Heart right ventricle (tissue), 16 donors: ENCODE measurements at regions of chr16 and their contacts with region 1.

Region 1: DNA sequence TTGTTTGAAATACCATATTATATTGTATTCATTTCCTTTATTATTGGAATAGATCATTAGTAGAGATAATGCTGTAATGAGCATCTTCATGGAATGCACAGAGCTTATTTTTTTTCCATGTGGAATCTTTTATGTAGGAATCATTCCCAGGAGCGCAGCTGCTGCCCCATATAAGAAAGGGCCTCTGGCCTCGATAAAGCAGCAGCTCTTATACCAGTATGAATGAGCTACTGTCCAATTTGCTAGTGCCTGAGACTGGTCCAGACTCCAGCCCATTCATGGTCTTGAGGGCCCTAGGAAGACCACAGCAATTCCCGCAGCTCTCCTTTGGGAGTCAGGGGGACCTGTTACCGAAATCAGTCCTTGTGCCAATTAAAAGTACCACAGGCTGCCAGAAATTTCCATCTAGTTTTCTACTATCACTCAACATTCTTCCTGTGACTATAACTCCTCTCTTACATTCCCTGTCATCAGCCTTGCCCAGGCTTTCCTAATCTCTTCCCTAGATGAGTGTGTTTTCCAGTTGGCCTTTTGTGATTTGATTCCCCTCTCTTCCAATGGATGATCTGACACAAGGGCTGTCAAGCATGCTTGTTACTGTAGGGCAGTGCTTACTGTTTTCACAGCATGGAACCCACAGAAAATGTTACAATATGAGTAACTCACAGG is 1.9 kb downstream of the ZNF843 start:
- DNase-seq: no peak
- ATAC-seq: no peak
- H3K4me3 ChIP-seq: no peak overlapping the region
- H3K27ac ChIP-seq: peak overlapping the region in 5 of 10 donors; percentile 8 to 93 (median 30)
- H3K4me1 ChIP-seq: peaks cover 0 to 37% (median 12%) of the 10 kb centered on the region in 9 donors
- H3K27me3 ChIP-seq: no peaks in the 10 kb centered on the region
- CTCF ChIP-seq: no peak

Region 2: GRCh38 chr16:30957456-30958174 is 483.0 kb before region 1 on chr16 and contains the start of gene SETD1A:
- intact Hi-C with region 1: loop called in 1 of 10 experiments (anchors 10 kb)
- DNase-seq: peak; percentile 96 to 99
- ATAC-seq: peak; percentile 90 to 97 (median 94)
- H3K4me3 ChIP-seq: peak within 1 kb of the TSS; percentile 70 to 99 (median 85)
- H3K27ac ChIP-seq: peak within 1 kb of the TSS; percentile 91 to 100 (median 99)
- H3K4me1 ChIP-seq: peaks cover 6 to 36% (median 29%) of the 10 kb centered on the region in 9 donors
- H3K27me3 ChIP-seq: no peaks in the 10 kb centered on the region
- CTCF ChIP-seq: no peak
- total RNA-seq, gene SETD1A: 7.5 to 11.4 (median 9.2) TPM

Region 3: DNA sequence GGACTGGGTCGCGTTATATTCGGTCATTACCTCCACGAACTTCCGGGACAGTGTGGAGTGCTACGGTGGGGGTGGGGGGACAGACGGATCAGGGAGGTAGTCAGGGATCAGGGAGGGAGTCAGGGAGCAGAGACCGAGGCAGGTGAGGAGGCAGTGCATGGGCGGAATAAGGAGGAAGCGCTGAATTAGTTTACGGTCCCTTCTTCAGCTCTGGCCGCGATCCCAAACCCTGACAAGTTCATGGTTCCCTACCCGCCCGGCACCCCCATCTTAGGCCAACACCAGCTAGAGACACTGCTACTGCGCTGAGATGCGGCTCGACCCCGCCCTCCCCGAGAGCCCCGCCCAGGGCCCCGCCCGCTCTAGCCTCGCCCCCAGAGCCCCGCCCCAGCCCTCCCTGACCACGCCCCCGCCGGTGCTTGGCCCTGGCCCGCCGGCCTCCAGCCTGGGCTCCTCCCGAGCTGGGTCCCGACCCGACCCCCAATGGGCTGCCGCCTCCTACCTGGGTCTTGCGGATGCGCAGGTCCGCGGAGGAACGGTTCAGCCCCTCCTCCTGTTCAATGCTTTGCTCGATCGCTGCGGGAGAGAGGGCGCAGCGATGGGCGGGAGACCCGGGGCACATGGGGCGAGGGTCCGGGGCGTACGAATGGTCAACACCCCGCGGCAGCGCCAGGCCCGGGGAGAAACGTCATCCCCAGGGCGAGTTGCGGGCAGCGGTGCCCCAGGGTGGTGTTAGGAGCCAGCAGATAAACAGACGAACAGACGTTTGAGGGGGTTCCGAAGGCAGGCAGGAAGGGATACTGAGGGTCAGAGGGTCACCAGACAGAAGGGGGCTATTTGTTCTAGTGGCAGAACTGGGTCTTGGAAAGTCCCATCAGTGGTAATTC is 443.4 kb before region 1 on chr16:
- intact Hi-C with region 1: loop called in 1 of 10 experiments (anchors 5 kb)
- DNase-seq: peak; percentile 74 to 90
- ATAC-seq: peak; percentile 93 to 95 (median 94)
- H3K4me3 ChIP-seq: peak overlapping the region; percentile 38 to 64 (median 60)
- H3K27ac ChIP-seq: peak overlapping the region in 9 of 10 donors; percentile 39 to 88 (median 55)
- H3K4me1 ChIP-seq: peaks cover 4 to 34% (median 16%) of the 10 kb centered on the region in 9 donors
- H3K27me3 ChIP-seq: no peaks in the 10 kb centered on the region
- CTCF ChIP-seq: no peak

Region 4: GRCh38 chr16:31179747-31180459 is 260.7 kb before region 1 on chr16 and contains the start of gene FUS:
- intact Hi-C with region 1: loop called in 3 of 10 experiments (anchors 5 to 10 kb)
- DNase-seq: peak; percentile 90 to 92
- ATAC-seq: peak; percentile 84 to 93 (median 90)
- H3K4me3 ChIP-seq: peak within 1 kb of the TSS; percentile 71 to 94 (median 83)
- H3K27ac ChIP-seq: peak within 1 kb of the TSS; percentile 89 to 99 (median 94)
- H3K4me1 ChIP-seq: peaks cover 10 to 57% (median 42%) of the 10 kb centered on the region in 9 donors
- H3K27me3 ChIP-seq: no peaks in the 10 kb centered on the region
- CTCF ChIP-seq: no peak
- total RNA-seq, gene FUS: 127 to 174 (median 140) TPM

Region 5: DNA sequence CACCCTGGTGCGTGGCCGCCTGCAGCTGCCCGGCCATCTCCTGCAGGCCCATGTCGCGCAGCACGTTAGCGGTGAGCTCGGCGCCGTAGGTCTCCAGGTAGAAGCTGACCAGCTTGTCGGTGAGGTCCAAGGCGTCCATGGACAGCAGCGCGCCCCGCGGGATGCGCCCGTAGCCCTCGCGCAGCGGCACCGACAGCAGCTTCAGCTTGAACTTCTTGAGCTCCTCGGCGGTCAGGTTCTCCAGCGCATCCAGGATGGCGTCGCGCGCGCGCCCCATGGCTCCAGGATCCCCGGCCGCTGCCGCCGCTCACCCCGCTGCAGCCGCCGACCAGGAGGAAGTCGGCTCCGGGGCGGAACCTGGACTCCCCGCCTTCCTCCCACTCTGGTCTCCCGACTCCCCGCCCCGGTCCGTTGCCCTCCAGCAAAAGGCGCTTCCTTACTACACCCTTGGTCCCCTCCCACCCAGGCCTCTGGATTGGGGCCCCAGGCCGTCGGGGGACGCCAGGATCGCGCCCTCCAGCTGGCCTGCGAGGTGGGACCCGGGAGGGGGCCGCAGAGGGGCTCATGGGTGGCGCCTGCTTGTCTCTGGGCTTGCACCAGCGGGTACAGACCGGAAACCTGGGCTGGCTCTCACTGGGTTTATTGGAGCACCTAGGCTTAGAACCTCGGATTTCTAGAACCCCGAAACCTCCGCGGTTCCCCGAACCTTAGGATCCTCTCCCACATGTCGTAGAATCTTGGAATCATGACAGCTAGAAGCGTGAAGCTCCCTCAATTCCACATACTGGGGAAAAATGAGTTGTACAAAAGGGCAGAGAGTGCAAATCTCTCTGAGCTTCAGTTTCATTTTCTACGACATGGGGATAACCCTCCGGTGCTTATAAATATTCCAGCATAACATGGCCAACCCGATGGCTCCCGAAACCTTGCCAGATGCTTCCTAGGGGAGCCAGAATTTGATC is 238.0 kb before region 1 on chr16 and contains the start of gene PYCARD:
- intact Hi-C with region 1: loop called in 1 of 10 experiments (anchors 10 kb)
- DNase-seq: peak; percentile 50 to 73
- ATAC-seq: peak; percentile 70 to 82 (median 76)
- H3K4me3 ChIP-seq: peak within 1 kb of the TSS; percentile 46 to 84 (median 72)
- H3K27ac ChIP-seq: peak within 1 kb of the TSS in 9 of 10 donors; percentile 46 to 91 (median 61)
- H3K4me1 ChIP-seq: peaks cover 0 to 50% (median 17%) of the 10 kb centered on the region in 9 donors
- H3K27me3 ChIP-seq: no peaks in the 10 kb centered on the region
- CTCF ChIP-seq: no peak
- total RNA-seq, gene PYCARD: 1.7 to 26.1 (median 2.8) TPM

Region 6: DNA sequence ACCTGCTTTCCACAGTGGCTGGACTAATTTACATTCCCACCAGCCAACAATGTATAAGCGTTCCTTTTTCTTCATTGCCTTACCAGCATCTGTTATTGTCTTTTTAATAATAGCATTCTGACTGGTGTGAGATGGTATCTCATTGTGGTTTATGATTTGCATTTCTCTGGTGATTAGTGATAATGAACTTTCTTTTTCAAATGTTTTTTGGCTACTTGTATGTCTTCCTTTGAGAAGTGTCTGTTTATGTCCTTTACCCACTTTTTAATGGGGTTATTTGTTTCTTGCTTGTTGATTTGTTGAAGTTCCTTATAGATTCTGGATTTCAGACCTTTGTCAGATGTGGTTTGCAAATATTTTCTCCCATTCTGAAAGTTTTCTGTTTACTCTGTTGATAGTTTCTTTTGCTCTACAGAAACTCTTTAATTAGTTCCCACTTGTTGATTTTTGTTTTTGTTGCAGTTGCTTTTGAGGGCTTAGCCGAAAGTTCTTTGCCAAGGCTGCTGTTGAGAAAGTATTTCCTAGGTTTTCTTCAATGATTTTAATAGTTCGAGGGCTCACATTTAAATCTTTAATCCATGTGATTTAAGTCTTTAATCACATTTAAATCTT is 154.1 kb before region 1 on chr16:
- intact Hi-C with region 1: no loop called
- DNase-seq: no peak
- ATAC-seq: no peak
- H3K4me3 ChIP-seq: no peak overlapping the region
- H3K27ac ChIP-seq: no peak overlapping the region
- H3K4me1 ChIP-seq: peaks cover 0 to 3% (median 0%) of the 10 kb centered on the region in 9 donors
- H3K27me3 ChIP-seq: peaks cover 0 to 42% (median 0%) of the 10 kb centered on the region in 7 donors
- CTCF ChIP-seq: no peak